SK-N-SH (cell line): ENCODE measurements at regions of chr11 and their contacts with region 1.

Region 1: GRCh38 chr11:126480410-126481302 is 125.2 kb downstream of the ST3GAL4 start:
- DNase-seq: peak; percentile 88
- H3K4me3 ChIP-seq: no peak overlapping the region
- H3K27ac ChIP-seq: peak overlapping the region; percentile 37 to 58; a peak in 3 of 4 replicates
- H3K4me1 ChIP-seq: peaks cover 0 to 5% of the 10 kb centered on the region in 2 experiments; a peak in 1 of 4 replicates
- H3K27me3 ChIP-seq: no peaks in the 10 kb centered on the region
- CTCF ChIP-seq: peak; percentile 93
- EP300 ChIP-seq: no peak
- RAD21 ChIP-seq: peak; percentile 83

Region 2: DNA sequence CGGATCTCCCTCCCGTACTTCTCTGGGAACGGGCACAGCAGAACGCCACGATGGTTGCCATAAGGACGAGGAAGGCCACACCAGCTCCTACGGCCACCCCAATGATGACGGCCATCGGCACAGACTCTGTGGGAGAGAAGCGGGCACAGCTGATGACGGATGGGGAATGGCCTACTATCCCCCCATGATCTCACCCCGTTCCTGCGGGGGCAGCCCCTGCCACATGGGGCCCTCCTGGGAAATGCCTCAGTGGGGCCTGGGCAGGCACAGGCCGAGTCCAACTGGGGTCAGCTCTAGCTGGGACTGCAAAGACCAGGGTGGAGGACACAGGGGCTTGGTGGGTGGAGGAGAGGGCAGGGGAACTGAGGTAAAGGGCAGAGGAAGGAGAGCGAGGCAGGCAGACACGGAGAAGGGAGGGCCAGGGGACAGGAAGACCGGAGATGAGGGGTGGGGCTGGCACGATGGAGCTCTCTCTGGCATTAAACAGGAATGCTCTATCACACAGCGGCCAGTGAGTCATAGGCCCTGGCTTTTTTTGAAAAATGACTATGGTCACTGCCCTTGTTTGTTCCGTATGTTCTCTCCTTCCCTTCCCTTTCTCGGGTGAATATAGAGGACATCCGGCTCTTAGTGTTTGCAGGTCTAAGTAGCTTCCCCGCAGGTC is 49.1 kb before region 1 on chr11:
- CTCF ChIA-PET with region 1: interaction called, 34 read pairs
- POLR2A ChIA-PET with region 1: no interaction called
- DNase-seq: no peak
- H3K4me3 ChIP-seq: no peak overlapping the region
- H3K27ac ChIP-seq: peak overlapping the region; percentile 40 to 79; a peak in 3 of 4 replicates
- H3K4me1 ChIP-seq: peaks cover 0 to 14% of the 10 kb centered on the region in 2 experiments; a peak in 3 of 4 replicates
- H3K27me3 ChIP-seq: no peaks in the 10 kb centered on the region
- CTCF ChIP-seq: no peak
- EP300 ChIP-seq: no peak; a peak in 1 of 4 replicates
- RAD21 ChIP-seq: no peak

Region 3: GRCh38 chr11:126452241-126453101 is 28.2 kb before region 1 on chr11:
- CTCF ChIA-PET with region 1: interaction called, 21 read pairs
- POLR2A ChIA-PET with region 1: no interaction called
- DNase-seq: peak; percentile 75
- H3K4me3 ChIP-seq: no peak overlapping the region
- H3K27ac ChIP-seq: no peak overlapping the region
- H3K4me1 ChIP-seq: peaks cover 0 to 28% of the 10 kb centered on the region in 2 experiments; a peak in 1 of 4 replicates
- H3K27me3 ChIP-seq: no peaks in the 10 kb centered on the region
- CTCF ChIP-seq: no peak
- EP300 ChIP-seq: no peak
- RAD21 ChIP-seq: no peak

Region 4: GRCh38 chr11:126496576-126497337 is 16.1 kb after region 1 on chr11:
- CTCF ChIA-PET with region 1: interaction called, 21 read pairs
- POLR2A ChIA-PET with region 1: no interaction called
- DNase-seq: no peak
- H3K4me3 ChIP-seq: no peak overlapping the region
- H3K27ac ChIP-seq: no peak overlapping the region; a peak in 1 of 4 replicates
- H3K4me1 ChIP-seq: peaks cover 0 to 27% of the 10 kb centered on the region in 2 experiments; a peak in 2 of 4 replicates
- H3K27me3 ChIP-seq: no peaks in the 10 kb centered on the region
- CTCF ChIP-seq: no peak
- EP300 ChIP-seq: no peak
- RAD21 ChIP-seq: no peak

Region 5: DNA sequence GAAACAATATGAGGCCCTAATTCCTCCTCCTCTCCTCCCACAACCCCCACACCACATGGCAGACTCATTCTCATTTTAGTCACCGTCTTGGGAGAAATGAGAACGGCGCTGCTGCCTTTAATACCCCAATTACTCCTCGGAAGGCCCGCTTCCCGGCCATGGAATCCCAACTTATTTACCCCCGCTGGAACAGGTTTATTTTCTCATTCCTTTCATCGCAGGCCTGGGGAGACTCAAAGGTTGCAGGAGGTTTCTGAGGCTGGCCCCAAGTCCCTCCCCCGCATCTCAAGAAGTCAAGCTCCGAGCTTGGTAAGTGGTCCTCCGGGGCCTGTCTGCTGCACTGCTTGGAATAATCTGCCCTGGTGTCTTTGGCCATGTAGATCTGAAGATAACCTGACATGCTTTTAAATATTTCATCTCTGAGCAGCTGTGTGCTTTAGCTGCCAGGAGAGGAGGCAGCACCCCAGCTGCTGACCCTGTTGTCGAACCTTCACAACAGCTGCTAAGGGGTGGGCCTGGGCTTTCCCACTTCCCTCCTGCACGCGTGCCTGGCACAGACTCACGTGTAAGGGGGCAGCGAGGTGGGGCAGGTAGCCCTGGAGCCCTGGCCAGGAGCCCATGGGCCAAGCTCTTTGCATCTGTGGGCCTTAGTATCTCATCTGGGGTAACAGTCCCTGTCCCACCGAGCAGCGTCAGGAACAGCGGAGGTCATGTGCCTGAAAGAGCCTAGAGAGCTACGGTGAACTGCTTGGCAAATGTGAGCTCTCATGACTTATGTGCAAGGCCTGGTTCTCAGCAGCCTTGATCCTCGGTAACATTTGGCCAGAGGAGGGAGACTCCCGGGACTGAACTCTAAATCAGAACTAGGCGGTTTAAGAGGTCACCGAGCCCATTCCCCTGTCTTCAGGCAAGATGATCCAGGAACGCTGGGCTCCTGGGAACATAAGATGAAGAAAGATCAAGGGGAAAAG is 39.4 kb after region 1 on chr11:
- CTCF ChIA-PET with region 1: interaction called, 22 read pairs
- POLR2A ChIA-PET with region 1: no interaction called
- DNase-seq: peak; percentile 53
- H3K4me3 ChIP-seq: no peak overlapping the region
- H3K27ac ChIP-seq: peak overlapping the region in 1 of 2 experiments; percentile 96; a peak in 2 of 4 replicates
- H3K4me1 ChIP-seq: peaks cover 0 to 56% of the 10 kb centered on the region in 2 experiments; a peak in 2 of 4 replicates
- H3K27me3 ChIP-seq: no peaks in the 10 kb centered on the region
- CTCF ChIP-seq: no peak
- EP300 ChIP-seq: no peak; a peak in 1 of 4 replicates
- RAD21 ChIP-seq: no peak; the same call in 1 of the 2 replicates

Region 6: GRCh38 chr11:126607374-126607773 is 126.7 kb after region 1 on chr11:
- CTCF ChIA-PET with region 1: interaction called, 17 read pairs
- POLR2A ChIA-PET with region 1: no interaction called
- DNase-seq: peak; percentile 83
- H3K4me3 ChIP-seq: no peak overlapping the region
- H3K27ac ChIP-seq: no peak overlapping the region
- H3K4me1 ChIP-seq: peaks cover 0 to 30% of the 10 kb centered on the region in 2 experiments; a peak in 2 of 4 replicates
- H3K27me3 ChIP-seq: no peaks in the 10 kb centered on the region
- CTCF ChIP-seq: peak; percentile 83
- EP300 ChIP-seq: no peak
- RAD21 ChIP-seq: peak; percentile 91

Region 7: DNA sequence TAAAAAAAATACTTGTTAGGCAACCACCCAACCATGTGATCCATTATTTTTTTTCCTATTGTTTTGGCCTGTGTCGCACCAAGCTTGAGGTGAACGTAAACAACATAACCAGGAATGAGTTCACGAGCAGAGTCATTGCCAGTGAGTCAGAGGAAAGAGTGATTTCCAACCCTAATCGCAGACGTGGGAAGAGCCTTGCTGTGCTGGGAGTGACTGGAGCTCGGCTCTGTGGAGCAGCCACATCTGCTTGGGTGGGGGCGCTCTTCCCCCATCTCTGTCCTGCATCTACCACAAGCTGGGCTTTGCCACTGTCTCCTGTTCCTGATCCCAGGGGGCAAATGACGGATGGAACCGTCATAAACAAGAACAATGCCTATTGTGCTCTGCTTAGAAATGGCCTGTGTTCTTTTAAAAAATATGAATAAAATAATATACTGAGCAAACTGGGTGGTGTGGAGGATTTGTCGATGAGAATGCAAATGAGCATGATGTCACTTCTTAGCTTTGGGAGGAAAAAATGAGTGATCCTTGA is 310.0 kb after region 1 on chr11:
- CTCF ChIA-PET with region 1: no interaction called
- POLR2A ChIA-PET with region 1: no interaction called
- DNase-seq: no peak
- H3K4me3 ChIP-seq: no peak overlapping the region
- H3K27ac ChIP-seq: peak overlapping the region in 1 of 2 experiments; percentile 60; a peak in 2 of 4 replicates
- H3K4me1 ChIP-seq: peaks cover 0 to 7% of the 10 kb centered on the region in 2 experiments; a peak in 1 of 4 replicates
- H3K27me3 ChIP-seq: no peaks in the 10 kb centered on the region
- CTCF ChIP-seq: peak; percentile 46
- EP300 ChIP-seq: no peak
- RAD21 ChIP-seq: peak; percentile 25; the same call in 1 of the 2 replicates